Natural killer cell (primary cell): ENCODE measurements at regions of chr19 and their contacts with region 1.

Region 1: DNA sequence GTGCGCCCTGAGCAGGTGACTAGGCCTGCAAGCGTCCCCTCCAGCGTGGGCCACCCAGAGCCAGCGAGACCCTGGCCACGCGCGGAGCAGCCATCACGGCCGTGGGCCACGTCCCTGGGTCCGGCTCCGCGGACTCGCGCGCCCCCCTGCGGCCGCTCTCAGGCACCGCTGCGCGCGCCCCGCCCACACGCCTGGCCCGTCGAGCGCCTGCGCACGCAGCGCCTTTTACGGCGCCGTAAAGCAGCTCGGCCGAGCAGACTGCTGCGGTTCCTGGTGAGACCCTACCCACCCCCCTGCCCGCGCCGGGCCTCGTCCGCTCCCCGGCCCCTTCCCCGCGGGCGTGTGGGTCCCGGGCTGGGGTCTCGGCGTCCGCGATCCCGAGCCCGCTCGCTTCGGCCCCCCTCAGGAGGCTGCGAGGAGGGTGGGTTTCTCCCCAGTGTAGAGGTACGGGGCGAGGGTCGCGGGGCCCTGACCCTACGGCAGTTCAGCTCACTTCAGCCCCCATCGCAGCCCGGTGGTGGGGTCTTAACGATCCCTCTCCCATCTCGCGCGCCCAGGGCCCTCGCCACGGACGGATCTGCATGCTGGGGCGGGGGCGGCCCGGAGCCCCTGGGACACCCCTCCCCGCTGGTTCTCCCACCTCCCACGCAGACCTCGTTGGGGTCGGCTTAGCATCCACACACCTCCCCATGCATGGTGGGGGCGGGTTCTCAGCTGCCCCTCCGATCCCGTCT is at the start of gene TRAPPC5:
- DNase-seq: peak; percentile 92 to 95
- ATAC-seq: peak; percentile 80 to 91 (median 82)
- H3K4me3 ChIP-seq: peak within 1 kb of the TSS; percentile 100
- H3K4me3 Mint-ChIP-seq: peak within 1 kb of the TSS; percentile 91
- H3K27ac ChIP-seq: peak within 1 kb of the TSS; percentile 70
- H3K27ac Mint-ChIP-seq: peak within 1 kb of the TSS; percentile 69 to 94
- H3K4me1 ChIP-seq: peaks cover 51% of the 10 kb centered on the region
- H3K4me1 Mint-ChIP-seq: peaks cover 13 to 43% of the 10 kb centered on the region in 2 donors
- H3K27me3 ChIP-seq: no peaks in the 10 kb centered on the region
- H3K27me3 Mint-ChIP-seq: peaks cover 13 to 19% of the 10 kb centered on the region in 2 donors
- CTCF ChIP-seq: peak; percentile 94
- total RNA-seq, gene TRAPPC5: 53.8 to 58.8 (median 54.2) TPM

Region 2: GRCh38 chr19:7562646-7563393 is 118.0 kb before region 1 on chr19:
- intact Hi-C with region 1: loop called (anchors 2 kb)
- DNase-seq: peak in 1 of 2 donors; percentile 40
- ATAC-seq: no peak
- H3K4me3 ChIP-seq: no peak overlapping the region
- H3K4me3 Mint-ChIP-seq: no peak overlapping the region
- H3K27ac ChIP-seq: no peak overlapping the region
- H3K27ac Mint-ChIP-seq: no peak overlapping the region
- H3K4me1 ChIP-seq: no peaks in the 10 kb centered on the region
- H3K4me1 Mint-ChIP-seq: peaks cover 0 to 5% of the 10 kb centered on the region in 2 donors
- H3K27me3 ChIP-seq: no peaks in the 10 kb centered on the region
- H3K27me3 Mint-ChIP-seq: no peaks in the 10 kb centered on the region
- CTCF ChIP-seq: no peak

Region 3: DNA sequence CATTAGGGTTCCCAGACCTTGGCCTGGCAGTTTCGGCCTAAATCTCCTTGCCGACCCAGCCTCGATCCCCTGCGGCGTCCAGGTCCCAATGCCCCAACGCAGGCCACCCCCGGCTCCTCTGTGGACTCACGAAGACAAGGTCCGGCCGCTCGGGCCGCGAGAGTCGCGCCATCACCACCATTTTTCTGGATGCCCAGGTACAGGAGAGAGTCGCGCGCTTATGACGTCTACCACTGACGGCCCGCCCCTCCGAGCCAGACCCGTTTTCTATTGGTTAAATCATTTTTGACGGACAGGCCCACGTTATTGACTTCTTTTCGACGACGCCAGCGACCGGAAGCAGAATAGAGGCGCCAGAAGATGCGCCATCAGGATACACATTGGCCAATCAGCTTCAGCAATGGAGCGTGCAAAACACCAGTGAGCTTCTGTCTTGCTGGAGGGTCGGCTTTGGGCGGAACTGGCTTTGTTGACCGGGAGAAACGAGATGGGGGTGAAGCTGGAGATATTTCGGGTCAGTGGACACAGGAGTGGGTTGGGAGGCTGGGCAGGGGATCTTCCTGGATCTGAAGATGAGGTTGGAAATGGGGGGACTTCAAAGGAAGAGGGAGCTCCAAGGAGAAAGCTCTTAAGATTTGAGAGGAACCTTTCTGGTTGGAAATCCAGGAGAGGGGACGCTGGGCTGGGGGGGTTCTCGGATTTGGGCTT is 51.3 kb before region 1 on chr19 and contains the starts of genes PET100 and XAB2:
- intact Hi-C with region 1: loop called (anchors 10 kb)
- DNase-seq: peak; percentile 94 to 98
- ATAC-seq: peak; percentile 96
- H3K4me3 ChIP-seq: peak within 1 kb of the TSS; percentile 90
- H3K4me3 Mint-ChIP-seq: peak within 1 kb of the TSS; percentile 100
- H3K27ac ChIP-seq: peak within 1 kb of the TSS; percentile 87
- H3K27ac Mint-ChIP-seq: peak within 1 kb of the TSS; percentile 99
- H3K4me1 ChIP-seq: peaks cover 30% of the 10 kb centered on the region
- H3K4me1 Mint-ChIP-seq: peaks cover 29 to 58% of the 10 kb centered on the region in 2 donors
- H3K27me3 ChIP-seq: no peaks in the 10 kb centered on the region
- H3K27me3 Mint-ChIP-seq: no peaks in the 10 kb centered on the region
- CTCF ChIP-seq: no peak
- total RNA-seq, gene PET100: 92.0 to 139 (median 106) TPM
- total RNA-seq, gene XAB2: 60.2 to 70.8 (median 67.7) TPM

Region 4: DNA sequence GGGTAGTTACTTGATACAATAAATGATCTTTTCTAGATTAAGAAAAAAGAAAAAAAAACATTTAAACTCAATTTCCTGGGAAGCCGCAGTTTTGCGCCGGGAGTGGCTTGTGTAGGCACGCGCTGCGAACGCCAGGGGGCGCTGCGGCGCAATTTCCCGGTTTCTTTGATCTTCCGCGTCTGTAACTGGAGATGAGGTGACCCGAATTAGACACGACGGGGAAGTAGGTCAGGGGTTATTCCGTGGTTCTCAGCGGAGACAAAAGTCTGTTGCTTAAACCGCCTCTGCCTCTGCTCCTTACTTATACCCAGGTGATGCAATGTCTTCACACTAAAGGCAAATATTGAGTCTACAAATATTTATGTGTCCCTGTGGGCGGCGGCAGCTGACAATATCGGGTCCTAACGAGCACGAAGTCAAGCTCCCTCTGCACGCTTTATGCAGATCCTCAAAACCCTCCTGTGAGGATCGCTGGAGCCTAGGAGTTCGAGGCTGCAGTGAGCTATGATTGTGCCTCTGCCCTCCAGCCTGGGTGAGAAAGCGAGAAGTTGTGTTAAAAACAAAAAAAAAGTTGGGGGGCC is 28.6 kb before region 1 on chr19:
- intact Hi-C with region 1: loop called (anchors 1 kb)
- DNase-seq: peak; percentile 87 to 94
- ATAC-seq: peak; percentile 91 to 92 (median 92)
- H3K4me3 ChIP-seq: peak overlapping the region; percentile 13
- H3K4me3 Mint-ChIP-seq: peak overlapping the region; percentile 83
- H3K27ac ChIP-seq: peak overlapping the region; percentile 58
- H3K27ac Mint-ChIP-seq: peak overlapping the region; percentile 82 to 91
- H3K4me1 ChIP-seq: peaks cover 10% of the 10 kb centered on the region
- H3K4me1 Mint-ChIP-seq: peaks cover 5 to 10% of the 10 kb centered on the region in 2 donors
- H3K27me3 ChIP-seq: no peaks in the 10 kb centered on the region
- H3K27me3 Mint-ChIP-seq: no peaks in the 10 kb centered on the region
- CTCF ChIP-seq: peak; percentile 98

Region 5: GRCh38 chr19:7692417-7693088 is 11.8 kb after region 1 on chr19:
- intact Hi-C with region 1: loop called (anchors 1 kb)
- DNase-seq: peak; percentile 46 to 79
- ATAC-seq: peak; percentile 24 to 71 (median 67)
- H3K4me3 ChIP-seq: no peak overlapping the region
- H3K4me3 Mint-ChIP-seq: no peak overlapping the region
- H3K27ac ChIP-seq: peak overlapping the region; percentile 81
- H3K27ac Mint-ChIP-seq: no peak overlapping the region
- H3K4me1 ChIP-seq: peaks cover 49% of the 10 kb centered on the region
- H3K4me1 Mint-ChIP-seq: no peaks in the 10 kb centered on the region
- H3K27me3 ChIP-seq: no peaks in the 10 kb centered on the region
- H3K27me3 Mint-ChIP-seq: peaks cover 0 to 2% of the 10 kb centered on the region in 2 donors
- CTCF ChIP-seq: no peak